Activated CD4-positive, alpha-beta T cell treated with anti-CD3 and anti-CD28 coated beads for 36 hours (primary cell): ENCODE measurements at regions of chr7 and their contacts with region 1.

Region 1: DNA sequence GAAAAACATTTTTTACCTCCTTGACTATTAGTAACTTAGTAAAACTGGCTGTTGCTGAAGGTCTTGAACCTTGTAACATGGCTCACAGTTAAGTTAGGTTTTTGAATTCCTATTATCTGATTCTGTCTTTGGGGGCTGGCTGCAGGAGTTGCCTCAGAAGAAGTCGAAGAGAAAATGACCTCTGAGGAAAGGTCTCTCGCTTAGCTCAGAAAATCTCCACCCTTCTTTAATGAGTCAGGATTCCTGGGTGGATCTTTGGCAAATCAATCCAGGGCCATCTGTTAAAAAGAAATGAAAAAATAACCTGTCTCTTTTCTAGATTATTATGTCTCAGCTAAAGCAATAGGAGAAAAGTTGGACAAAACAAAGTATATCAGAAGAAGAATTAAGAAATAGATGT is 267.8 kb upstream of the SEMA3C start:
- DNase-seq: no peak
- ATAC-seq: no peak
- H3K4me3 Mint-ChIP-seq: no peak overlapping the region
- H3K27ac Mint-ChIP-seq: no peak overlapping the region
- H3K4me1 Mint-ChIP-seq: no peaks in the 10 kb centered on the region
- H3K27me3 Mint-ChIP-seq: no peaks in the 10 kb centered on the region

Region 2: GRCh38 chr7:81207801-81208200 is 21.1 kb after region 1 on chr7:
- CTCF ChIA-PET with region 1: no interaction called
- POLR2A ChIA-PET with region 1: no interaction called
- intact Hi-C with region 1: loop called in 1 of 2 experiments (anchors 2 kb)
- DNase-seq: no peak
- ATAC-seq: no peak
- H3K4me3 Mint-ChIP-seq: no peak overlapping the region
- H3K27ac Mint-ChIP-seq: no peak overlapping the region
- H3K4me1 Mint-ChIP-seq: no peaks in the 10 kb centered on the region
- H3K27me3 Mint-ChIP-seq: no peaks in the 10 kb centered on the region